ENCODE measurements at regions of chr17 and their contacts with region 1.

Region 1: DNA sequence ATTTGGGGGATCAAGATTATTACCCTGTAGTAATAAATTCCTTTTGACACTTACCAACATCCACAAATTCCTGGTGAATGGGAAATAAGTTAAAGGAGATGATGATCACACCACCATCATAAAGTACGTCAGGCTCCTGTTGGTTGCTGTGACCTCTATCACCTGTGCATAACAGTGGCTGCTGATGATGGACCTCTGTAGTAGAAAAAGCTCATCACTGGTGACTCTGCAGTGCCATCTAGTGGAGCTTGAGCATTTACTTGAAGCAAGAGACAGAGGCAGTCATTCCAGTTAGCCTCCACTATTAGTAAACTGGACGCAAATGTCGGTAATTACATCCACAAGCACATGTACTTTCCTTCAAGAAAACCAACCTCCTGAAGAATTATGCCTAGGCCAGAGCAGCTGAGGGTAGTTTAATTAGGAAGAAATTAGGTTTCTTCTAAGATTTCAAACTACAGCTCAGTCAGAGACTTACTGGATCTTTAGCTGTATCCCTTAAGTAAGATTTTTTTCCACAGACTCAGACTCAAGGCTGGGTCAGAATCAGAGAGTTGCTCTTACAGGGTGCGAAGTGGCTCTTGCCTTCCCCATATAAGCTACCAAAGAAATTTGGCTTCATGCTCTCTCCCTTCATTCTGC is 39.3 kb downstream of the CYB561 start:
- DNase-seq: peak; percentile 71
- CTCF ChIP-seq: peak; percentile 74

Region 2: DNA sequence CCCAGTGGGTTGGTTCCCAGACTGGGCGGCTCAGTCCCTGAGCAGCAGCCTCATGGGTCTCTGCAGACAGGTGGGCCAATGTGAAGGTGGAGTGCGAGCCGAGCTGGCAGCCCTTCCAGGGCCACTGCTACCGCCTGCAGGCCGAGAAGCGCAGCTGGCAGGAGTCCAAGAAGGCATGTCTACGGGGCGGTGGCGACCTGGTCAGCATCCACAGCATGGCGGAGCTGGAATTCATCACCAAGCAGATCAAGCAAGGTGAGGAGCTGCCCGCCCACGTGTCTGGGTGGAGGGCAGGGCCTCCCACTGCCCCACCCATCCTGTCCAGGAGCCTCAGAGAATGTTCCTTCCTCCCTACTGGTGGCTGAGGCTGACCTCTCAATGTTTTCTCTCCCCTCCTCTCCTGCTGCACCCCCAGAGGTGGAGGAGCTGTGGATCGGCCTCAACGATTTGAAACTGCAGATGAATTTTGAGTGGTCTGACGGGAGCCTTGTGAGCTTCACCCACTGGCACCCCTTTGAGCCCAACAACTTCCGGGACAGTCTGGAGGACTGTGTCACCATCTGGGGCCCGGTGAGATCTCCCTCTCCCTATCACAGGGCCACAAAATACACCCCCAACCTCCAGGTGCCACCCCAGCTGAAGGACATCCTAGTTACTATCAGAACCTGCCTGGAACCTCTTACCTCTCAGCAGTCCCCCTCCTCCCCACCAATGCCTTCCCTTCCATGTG is 735.1 kb before region 1 on chr17:
- CTCF ChIA-PET with region 1: interaction called, 12 read pairs
- POLR2A ChIA-PET with region 1: no interaction called
- DNase-seq: no peak
- CTCF ChIP-seq: no peak

Region 3: DNA sequence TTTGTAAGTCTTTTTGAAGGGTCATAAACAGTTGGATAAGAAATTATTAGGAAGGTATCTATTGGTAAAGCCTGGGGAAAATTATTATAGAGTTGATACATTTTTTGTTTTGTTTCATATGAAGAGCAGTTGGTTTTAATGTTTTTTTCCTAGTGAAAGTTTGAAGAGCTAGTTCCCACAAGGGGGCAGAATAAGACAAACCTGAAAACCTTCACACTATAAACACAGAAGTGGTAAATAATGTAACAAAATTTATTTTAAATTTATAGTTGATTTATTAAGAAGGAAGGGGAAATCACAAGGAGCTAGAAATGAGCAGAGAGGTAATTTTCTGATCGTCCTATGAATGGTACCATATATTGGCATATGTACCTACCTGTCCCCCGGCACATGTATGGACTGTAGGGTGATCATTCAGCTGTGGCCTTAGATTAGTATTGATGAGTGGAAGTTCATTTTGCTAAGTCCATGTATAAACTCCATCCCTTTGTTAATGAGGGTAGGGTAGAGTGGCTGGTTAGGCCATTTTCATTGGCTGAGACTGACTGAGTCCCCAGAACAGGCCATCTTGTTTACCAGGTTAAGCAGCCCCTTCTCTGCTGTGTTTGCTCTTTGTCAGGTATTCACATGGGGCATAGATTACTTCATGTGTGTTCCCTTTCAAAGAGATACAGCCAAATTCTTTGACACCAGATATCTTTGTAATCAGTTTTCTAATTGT is 324.4 kb before region 1 on chr17:
- CTCF ChIA-PET with region 1: interaction called, 34 read pairs
- POLR2A ChIA-PET with region 1: no interaction called
- DNase-seq: no peak
- CTCF ChIP-seq: peak; percentile 43

Region 4: GRCh38 chr17:63221939-63222338 is 184.9 kb before region 1 on chr17:
- CTCF ChIA-PET with region 1: no interaction called
- POLR2A ChIA-PET with region 1: no interaction called
- DNase-seq: no peak
- CTCF ChIP-seq: no peak

Region 5: GRCh38 chr17:63387656-63388340 is 19.0 kb before region 1 on chr17:
- CTCF ChIA-PET with region 1: interaction called, 13 read pairs
- POLR2A ChIA-PET with region 1: no interaction called
- DNase-seq: no peak
- CTCF ChIP-seq: no peak

Region 6: GRCh38 chr17:63419949-63420867 is 13.4 kb after region 1 on chr17:
- CTCF ChIA-PET with region 1: interaction called, 51 read pairs
- POLR2A ChIA-PET with region 1: no interaction called
- DNase-seq: no peak
- CTCF ChIP-seq: no peak

Region 7: DNA sequence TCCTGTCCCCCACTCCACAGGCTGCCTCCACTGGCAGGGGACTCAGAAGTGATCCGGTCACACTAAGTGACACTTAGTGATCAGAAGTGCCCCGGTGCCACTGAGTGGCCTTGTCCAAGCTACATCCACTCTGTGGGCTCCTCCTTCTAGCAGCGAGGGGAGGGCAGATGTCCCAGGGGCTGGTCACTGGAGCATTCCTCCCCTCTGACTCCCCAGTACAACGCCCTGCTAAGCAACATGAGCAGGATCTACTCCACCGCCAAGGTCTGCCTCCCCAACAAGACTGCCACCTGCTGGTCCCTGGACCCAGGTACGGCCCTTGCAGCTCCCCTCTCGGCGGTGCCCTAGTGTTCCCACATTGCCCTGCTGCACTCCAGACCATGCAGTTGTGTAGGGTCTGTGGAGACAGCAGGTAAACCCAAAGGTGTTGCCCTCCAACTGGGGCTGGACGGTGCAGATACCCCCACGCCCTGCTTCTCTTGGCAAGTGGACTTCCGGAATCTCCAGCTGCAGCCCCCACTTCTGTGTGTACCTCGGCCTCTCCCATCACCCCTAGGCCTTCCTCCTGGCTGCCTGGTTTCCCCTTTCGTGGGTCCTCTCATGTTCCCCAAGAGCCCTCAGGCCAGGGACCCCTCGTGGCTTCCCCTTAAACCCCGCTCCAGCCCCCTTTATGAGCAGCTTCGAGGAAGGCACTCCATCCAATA is 72.1 kb after region 1 on chr17:
- CTCF ChIA-PET with region 1: interaction called, 17 read pairs
- POLR2A ChIA-PET with region 1: no interaction called
- DNase-seq: peak; percentile 92
- CTCF ChIP-seq: peak; percentile 87

Region 8: DNA sequence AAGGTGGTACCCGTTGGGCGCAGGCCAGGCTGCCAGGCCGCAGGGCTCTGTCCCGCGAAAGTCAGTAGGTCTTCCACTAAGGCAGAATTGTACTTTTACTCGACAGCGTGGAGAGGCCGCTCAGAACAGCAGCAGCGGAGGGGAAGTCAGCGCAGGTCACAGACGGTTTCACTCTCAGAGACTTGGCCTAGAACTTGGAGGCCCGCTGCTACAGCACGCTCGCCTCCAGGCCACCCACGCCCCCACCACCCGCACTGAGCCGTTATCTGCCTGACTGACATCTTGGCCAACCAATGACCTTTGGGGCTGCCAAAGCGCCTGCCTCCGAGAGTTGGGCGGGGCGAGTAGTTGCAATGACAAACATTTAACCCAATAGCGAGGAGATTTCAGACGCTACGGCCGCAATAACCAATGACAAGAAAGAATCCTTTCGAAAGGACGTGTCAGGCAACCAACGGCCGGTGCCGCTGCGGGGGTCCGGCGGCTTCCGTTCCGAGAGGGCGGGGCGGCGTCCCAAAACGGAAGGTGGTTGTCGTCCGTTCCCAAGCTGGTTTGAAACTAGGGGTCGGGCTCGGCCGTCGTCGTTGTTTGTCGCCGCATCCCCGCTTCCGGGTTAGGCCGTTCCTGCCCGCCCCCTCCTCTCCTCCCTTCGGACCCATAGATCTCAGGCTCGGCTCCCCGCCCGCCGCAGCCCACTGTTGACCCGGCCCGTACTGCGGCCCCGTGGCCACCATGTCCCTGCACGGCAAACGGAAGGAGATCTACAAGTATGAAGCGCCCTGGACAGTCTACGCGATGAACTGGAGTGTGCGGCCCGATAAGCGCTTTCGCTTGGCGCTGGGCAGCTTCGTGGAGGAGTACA is 143.4 kb after region 1 on chr17 and contains the start of gene DCAF7:
- CTCF ChIA-PET with region 1: no interaction called
- POLR2A ChIA-PET with region 1: no interaction called
- DNase-seq: peak; percentile 100
- CTCF ChIP-seq: no peak